ENCODE measurements at regions of chr19 and their contacts with region 1.

Region 1: DNA sequence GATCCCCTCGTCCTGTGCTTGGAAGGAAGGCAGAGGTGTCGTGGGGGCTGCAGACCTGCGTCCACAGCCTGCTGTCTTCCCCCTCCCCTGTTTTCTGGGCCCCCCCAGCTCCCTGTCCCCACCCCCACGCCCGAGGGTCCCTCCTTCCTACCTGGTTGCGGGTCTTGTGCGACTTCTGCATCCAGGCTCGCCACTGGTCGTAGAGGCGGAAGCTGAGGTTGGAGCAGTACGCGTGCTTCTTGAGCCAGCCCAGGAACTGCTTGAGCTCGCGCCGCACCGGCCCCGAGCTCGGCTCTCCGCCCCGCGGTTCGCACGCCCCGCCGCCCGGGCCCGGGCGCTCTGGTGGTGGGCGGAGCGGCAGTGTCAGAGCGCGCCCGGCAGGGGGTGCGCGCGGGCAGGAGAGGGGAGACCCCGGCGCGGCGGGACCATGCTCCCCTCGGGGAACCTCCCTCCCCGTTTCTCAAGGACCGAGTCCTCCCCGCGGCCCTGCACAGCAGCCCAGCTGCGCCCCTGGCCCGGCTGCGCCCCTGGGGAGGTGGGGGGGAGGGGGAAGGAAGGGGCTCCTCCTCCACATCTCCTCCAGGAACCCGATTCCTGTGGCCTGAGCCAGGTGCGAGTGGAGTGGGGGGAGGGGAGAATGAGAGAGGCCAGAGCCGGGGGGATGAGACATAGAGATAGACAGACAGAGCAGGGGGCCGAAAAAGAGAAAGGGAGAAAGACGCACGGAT is 5.7 kb downstream of the REX1BD start:
- DNase-seq: peak in 1 of 2 donors; percentile 87
- H3K4me3 ChIP-seq: peak overlapping the region; percentile 39 to 61
- H3K27ac ChIP-seq: peak overlapping the region in 1 of 2 donors; percentile 20
- H3K4me1 ChIP-seq: peaks cover 12 to 21% of the 10 kb centered on the region in 2 donors
- H3K27me3 ChIP-seq: peaks cover 3% of the 10 kb centered on the region
- CTCF ChIP-seq: peak; percentile 58 to 94 (median 81)

Region 2: DNA sequence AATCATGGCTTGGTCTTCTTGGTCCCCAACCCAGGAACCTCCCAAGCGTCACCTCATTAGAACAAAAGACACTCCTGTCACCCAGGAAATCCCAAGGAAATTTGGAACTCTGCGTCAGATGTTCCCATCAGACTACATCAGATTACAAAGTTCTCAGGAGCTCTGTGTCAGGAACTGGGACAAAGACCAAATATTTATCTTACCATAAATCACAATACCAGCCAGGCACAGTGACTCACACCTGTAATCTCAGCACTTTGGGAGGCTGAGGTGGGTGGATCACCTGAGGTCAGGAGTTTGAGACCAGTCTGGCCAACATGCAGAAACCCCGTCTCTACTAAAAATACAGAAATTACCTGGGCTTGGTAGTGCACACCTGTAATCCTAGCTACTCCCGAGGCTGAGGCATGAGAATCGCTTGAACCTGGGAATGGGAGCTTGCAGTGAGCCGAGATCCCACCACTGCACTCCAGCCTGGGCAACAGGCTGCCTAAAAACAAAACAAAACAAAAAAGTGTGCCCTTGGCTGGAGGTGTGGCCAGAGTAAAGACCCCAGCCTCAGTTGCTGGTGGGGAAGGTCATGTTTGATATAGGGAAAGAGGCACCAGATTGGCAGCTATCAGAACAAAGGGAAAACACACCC is 678.2 kb before region 1 on chr19:
- intact Hi-C with region 1: no loop called
- DNase-seq: no peak
- H3K4me3 ChIP-seq: no peak overlapping the region
- H3K27ac ChIP-seq: no peak overlapping the region
- H3K4me1 ChIP-seq: no peaks in the 10 kb centered on the region
- H3K27me3 ChIP-seq: no peaks in the 10 kb centered on the region
- CTCF ChIP-seq: no peak

Region 3: GRCh38 chr19:18672606-18673337 is 78.5 kb after region 1 on chr19:
- intact Hi-C with region 1: loop called (anchors 2 kb)
- DNase-seq: no peak
- H3K4me3 ChIP-seq: peak overlapping the region in 1 of 2 donors; percentile 38
- H3K27ac ChIP-seq: peak overlapping the region; percentile 50 to 59
- H3K4me1 ChIP-seq: peaks cover 5 to 18% of the 10 kb centered on the region in 2 donors
- H3K27me3 ChIP-seq: no peaks in the 10 kb centered on the region
- CTCF ChIP-seq: peak; percentile 23 to 48 (median 25)

Region 4: DNA sequence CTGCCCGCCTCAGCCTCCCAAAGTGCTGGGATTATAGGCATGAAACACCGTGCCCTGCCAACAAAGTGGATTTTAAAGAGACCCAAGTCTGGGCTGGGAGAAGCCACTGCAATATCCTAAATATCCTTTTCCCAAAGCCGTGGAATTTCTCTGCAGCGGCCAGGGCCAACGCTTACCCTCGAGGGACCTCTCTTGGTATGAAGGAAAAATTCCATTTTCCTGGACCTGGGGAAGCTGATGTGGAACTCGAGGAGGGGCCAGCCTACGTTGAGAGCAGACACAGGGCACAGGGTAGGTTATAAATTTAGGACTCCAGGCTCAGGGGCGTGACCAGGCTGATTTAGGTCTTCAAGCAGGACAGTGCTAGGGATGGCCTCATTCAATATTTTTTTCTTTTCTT is 219.8 kb after region 1 on chr19:
- intact Hi-C with region 1: loop called (anchors 1 kb)
- DNase-seq: peak in 1 of 2 donors; percentile 80
- H3K4me3 ChIP-seq: no peak overlapping the region
- H3K27ac ChIP-seq: no peak overlapping the region
- H3K4me1 ChIP-seq: peaks cover 1 to 16% of the 10 kb centered on the region in 2 donors
- H3K27me3 ChIP-seq: no peaks in the 10 kb centered on the region
- CTCF ChIP-seq: peak in 2 of 3 experiments; percentile 10 to 35

Region 5: DNA sequence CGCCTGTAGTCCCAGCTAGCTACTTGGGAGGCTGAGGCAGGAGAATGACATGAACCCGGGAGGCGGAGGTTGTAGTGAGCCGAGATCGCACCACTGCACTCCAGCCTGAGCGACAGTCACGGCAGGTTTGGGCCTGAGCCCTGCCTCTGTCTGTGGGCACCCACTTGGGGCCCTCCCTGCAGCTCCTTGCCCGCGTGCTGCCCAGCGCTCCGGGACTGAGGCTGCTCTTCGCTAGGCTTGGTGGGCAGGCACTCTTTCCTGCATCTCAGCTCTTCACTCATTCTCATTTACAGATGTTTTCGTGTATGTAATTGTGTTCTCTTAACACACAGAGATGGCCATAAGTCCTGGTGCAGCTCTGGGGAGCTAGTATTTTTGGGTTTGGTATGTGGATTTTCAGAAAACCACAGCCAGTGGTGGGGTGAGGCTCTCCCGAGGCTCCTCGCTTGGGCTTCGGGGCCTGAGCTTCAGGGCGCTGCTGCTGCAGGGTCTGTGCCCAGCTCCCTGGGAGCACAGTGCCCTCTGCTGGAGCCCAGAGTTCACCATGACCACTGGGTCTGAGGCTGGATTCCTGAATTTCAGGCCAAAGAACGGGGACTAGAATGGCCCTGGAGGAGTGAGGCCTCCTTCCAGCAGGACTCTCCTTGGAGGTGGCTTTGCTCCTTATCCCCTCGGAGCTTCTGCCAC is 252.7 kb after region 1 on chr19:
- intact Hi-C with region 1: loop called (anchors 2 kb)
- DNase-seq: peak in 1 of 2 donors; percentile 86
- H3K4me3 ChIP-seq: no peak overlapping the region
- H3K27ac ChIP-seq: peak overlapping the region; percentile 81 to 90
- H3K4me1 ChIP-seq: peaks cover 23 to 47% of the 10 kb centered on the region in 2 donors
- H3K27me3 ChIP-seq: no peaks in the 10 kb centered on the region
- CTCF ChIP-seq: peak; percentile 77 to 86 (median 77)